ENCODE measurements at regions of chr12 and their contacts with region 1.

Region 1: GRCh38 chr12:120453977-120454376 is 7.7 kb downstream of the GATC start:
- DNase-seq: peak; percentile 40
- H3K4me3 Mint-ChIP-seq: no peak overlapping the region
- H3K27ac Mint-ChIP-seq: no peak overlapping the region
- H3K4me1 Mint-ChIP-seq: peaks cover 7% of the 10 kb centered on the region
- H3K27me3 Mint-ChIP-seq: no peaks in the 10 kb centered on the region

Region 2: DNA sequence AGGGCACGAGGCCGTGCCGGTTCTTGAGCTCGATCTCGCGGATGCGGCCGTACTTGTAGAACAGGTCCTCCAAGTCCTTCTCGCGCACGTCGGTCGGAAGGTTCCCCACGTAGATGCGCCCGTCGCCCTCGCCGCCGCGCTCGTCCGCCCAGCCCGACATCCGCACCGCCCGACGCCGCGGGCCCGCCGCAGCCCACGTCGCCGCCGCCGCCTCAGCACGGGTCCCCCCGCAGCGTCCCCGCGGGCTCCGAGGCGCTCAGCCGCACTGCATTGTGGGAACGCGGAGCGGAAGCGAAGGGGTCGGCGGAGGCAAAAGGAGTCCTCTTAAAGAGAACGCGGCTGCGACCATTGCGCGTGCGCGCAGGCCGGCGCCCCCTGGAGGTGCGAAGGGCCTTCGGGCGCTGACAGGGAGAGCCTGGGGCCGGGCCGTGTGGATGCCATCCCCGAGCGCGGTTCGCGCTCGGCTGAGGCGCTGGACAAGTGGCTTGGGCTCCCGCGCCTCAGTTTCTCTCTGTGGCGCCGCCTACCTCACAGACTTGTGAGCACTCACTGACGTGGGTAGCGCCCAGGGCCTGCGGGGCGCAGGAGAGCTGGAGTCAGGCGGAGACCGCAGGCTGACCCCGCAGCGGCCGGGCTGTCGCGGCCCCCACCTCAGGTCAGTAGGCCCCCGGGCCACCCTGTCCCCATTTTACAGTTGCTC is 15.6 kb after region 1 on chr12 and contains the start of gene SRSF9:
- CTCF ChIA-PET with region 1: interaction called, 13 read pairs
- POLR2A ChIA-PET with region 1: interaction called, 3 read pairs
- DNase-seq: peak; percentile 97
- H3K4me3 Mint-ChIP-seq: peak within 1 kb of the TSS; percentile 93
- H3K27ac Mint-ChIP-seq: peak within 1 kb of the TSS; percentile 90
- H3K4me1 Mint-ChIP-seq: peaks cover 42% of the 10 kb centered on the region
- H3K27me3 Mint-ChIP-seq: peaks cover under 1% of the 10 kb centered on the region
- total RNA-seq, gene SRSF9: 145 to 159 TPM

Measured in activated CD4-positive, alpha-beta T cell treated with anti-CD3 and anti-CD28 coated beads, Interleukin-2, amount 10 ng/mL, durations not matched to agents 7 days and 5 days (primary cell).